Heart left ventricle (tissue), 16 donors: ENCODE measurements at regions of chr7 and their contacts with region 1.

Region 1: DNA sequence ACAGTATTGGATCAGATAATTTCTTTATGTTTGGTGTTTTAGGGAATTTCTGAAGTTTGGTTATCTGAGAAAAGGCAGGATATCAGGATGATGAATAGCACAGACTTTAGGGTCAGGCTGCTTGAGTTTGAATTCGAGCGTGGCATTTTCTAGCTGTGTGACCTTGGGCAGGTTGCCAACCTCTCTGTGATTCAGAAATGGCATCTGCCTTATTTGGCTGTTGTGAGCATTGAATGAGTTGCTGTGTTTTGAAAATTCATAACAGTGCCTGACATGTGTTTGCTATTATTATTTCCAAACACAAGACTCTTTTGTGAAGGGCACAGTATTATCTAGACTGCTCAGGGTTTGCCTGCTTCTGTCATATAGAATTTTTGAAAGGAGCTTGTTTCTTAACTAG is 66.9 kb downstream of the NXPH1 start:
- DNase-seq: no peak
- ATAC-seq: no peak
- H3K4me3 ChIP-seq: no peak overlapping the region
- H3K27ac ChIP-seq: no peak overlapping the region
- H3K4me1 ChIP-seq: no peaks in the 10 kb centered on the region
- H3K27me3 ChIP-seq: no peaks in the 10 kb centered on the region
- CTCF ChIP-seq: no peak
- POLR2A ChIP-seq: no peak

Region 2: DNA sequence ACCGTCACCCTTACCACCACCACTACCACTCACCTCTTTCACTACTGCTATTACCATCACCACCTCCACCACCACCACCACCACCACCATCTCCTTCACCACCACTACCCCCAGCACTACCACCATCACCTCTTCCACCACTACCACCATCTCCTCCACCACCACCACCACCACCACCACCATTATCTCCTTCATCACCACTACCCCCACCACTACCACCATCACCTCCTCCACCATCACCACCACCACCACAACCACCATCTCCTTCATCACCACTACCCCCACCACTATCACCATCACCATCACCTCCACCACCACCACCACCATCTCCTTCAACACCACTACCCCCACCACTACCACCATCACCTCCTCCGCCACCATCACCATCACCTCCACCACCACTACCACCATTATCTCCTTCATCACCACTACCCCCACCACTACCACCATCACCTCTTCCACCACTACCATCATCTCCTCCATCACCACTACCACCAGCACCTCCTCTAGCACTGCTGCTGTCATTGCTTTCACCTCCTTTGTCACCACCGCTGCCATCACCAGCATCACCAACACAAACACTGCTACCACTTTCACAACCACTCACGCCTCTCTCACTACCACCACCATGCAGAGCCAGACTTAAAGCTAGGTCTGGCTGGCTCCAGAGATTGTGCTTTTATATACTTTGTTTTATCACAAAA is 347.6 kb before region 1 on chr7:
- intact Hi-C with region 1: loop called in 1 of 10 experiments (anchors 10 kb)
- DNase-seq: no peak
- ATAC-seq: peak in 2 of 4 donors; percentile 14 to 67
- H3K4me3 ChIP-seq: no peak overlapping the region
- H3K27ac ChIP-seq: no peak overlapping the region
- H3K4me1 ChIP-seq: peaks cover 0 to 25% (median 5%) of the 10 kb centered on the region in 12 donors
- H3K27me3 ChIP-seq: no peaks in the 10 kb centered on the region
- CTCF ChIP-seq: no peak
- POLR2A ChIP-seq: no peak

Region 3: DNA sequence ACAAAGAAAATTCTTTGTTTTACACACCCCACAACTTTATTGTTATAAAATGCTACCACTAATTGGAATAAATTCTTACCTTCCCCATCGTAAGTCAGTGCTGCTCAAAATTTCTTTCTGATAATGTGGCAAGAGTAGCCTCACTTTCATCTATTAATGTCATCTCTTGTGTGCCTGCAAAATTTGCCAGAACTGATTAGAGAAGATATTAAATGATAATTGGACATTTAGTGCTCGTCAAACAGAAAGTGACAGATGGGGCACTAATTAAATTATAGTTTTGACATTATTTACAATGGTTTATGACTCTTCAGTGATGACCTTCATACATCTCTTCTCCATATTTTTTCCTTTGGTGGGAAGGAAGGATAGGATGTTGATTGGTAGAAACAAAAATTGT is 624.0 kb after region 1 on chr7:
- intact Hi-C with region 1: no loop called
- DNase-seq: no peak
- ATAC-seq: no peak
- H3K4me3 ChIP-seq: no peak overlapping the region
- H3K27ac ChIP-seq: no peak overlapping the region
- H3K4me1 ChIP-seq: no peaks in the 10 kb centered on the region
- H3K27me3 ChIP-seq: no peaks in the 10 kb centered on the region
- CTCF ChIP-seq: no peak
- POLR2A ChIP-seq: no peak